ENCODE measurements at regions of chr19 and their contacts with region 1.

Region 1: GRCh38 chr19:15466851-15467733 is 2.7 kb upstream of the RASAL3 start:
- DNase-seq: peak; percentile 89
- ATAC-seq: peak; percentile 86
- H3K4me3 ChIP-seq: no peak overlapping the region
- H3K27ac ChIP-seq: peak overlapping the region; percentile 64
- H3K4me1 ChIP-seq: peaks cover 14% of the 10 kb centered on the region
- H3K27me3 ChIP-seq: no peaks in the 10 kb centered on the region
- CTCF ChIP-seq: no peak

Region 2: GRCh38 chr19:15195371-15196334 is 271.4 kb before region 1 on chr19:
- CTCF ChIA-PET with region 1: no interaction called
- POLR2A ChIA-PET with region 1: interaction called, 10 read pairs
- intact Hi-C with region 1: no loop called
- DNase-seq: peak; percentile 96
- ATAC-seq: peak; percentile 53
- H3K4me3 ChIP-seq: peak overlapping the region; percentile 57
- H3K27ac ChIP-seq: peak overlapping the region; percentile 89
- H3K4me1 ChIP-seq: peaks cover 25% of the 10 kb centered on the region
- H3K27me3 ChIP-seq: no peaks in the 10 kb centered on the region
- CTCF ChIP-seq: 0 out of 2 replicates have a peak, but pooled peaks have one; percentile 14

Region 3: GRCh38 chr19:15418588-15419412 is 48.3 kb before region 1 on chr19 and contains the start of gene AKAP8L:
- CTCF ChIA-PET with region 1: no interaction called
- POLR2A ChIA-PET with region 1: no interaction called
- intact Hi-C with region 1: no loop called
- DNase-seq: peak; percentile 99
- ATAC-seq: peak; percentile 92
- H3K4me3 ChIP-seq: peak within 1 kb of the TSS; percentile 97
- H3K27ac ChIP-seq: peak within 1 kb of the TSS; percentile 45
- H3K4me1 ChIP-seq: peaks cover 23% of the 10 kb centered on the region
- H3K27me3 ChIP-seq: no peaks in the 10 kb centered on the region
- CTCF ChIP-seq: peak; percentile 64
- total RNA-seq, gene AKAP8L: 97.9 and 137 TPM in 2 replicates

Region 4: GRCh38 chr19:15532779-15533521 is 65.9 kb after region 1 on chr19:
- CTCF ChIA-PET with region 1: no interaction called
- POLR2A ChIA-PET with region 1: no interaction called
- intact Hi-C with region 1: no loop called
- DNase-seq: peak; percentile 45
- ATAC-seq: no peak; the same call in 1 of the 2 replicates
- H3K4me3 ChIP-seq: no peak overlapping the region
- H3K27ac ChIP-seq: no peak overlapping the region
- H3K4me1 ChIP-seq: peaks cover 6% of the 10 kb centered on the region; the same call in 1 of the 2 replicates
- H3K27me3 ChIP-seq: peaks cover 3% of the 10 kb centered on the region; the same call in 1 of the 2 replicates
- CTCF ChIP-seq: no peak

Region 5: GRCh38 chr19:16016226-16017137 is 549.4 kb after region 1 on chr19:
- CTCF ChIA-PET with region 1: no interaction called
- POLR2A ChIA-PET with region 1: no interaction called
- intact Hi-C with region 1: no loop called
- DNase-seq: no peak
- ATAC-seq: no peak
- H3K4me3 ChIP-seq: no peak overlapping the region
- H3K27ac ChIP-seq: no peak overlapping the region
- H3K4me1 ChIP-seq: no peaks in the 10 kb centered on the region
- H3K27me3 ChIP-seq: no peaks in the 10 kb centered on the region
- CTCF ChIP-seq: no peak

Measured in PC-3 (cell line).